ENCODE measurements at regions of chr19 and their contacts with region 1.

Region 1: GRCh38 chr19:15555759-15556633 is 47.7 kb downstream of the CYP4F22 start:
- DNase-seq: peak; percentile 88
- ATAC-seq: peak; percentile 90
- H3K4me3 Mint-ChIP-seq: peak overlapping the region; percentile 83
- H3K27ac Mint-ChIP-seq: peak overlapping the region; percentile 73
- H3K4me1 Mint-ChIP-seq: peaks cover 17% of the 10 kb centered on the region
- H3K27me3 Mint-ChIP-seq: peaks cover 9% of the 10 kb centered on the region
- CTCF ChIP-seq: peak; percentile 33

Region 2: DNA sequence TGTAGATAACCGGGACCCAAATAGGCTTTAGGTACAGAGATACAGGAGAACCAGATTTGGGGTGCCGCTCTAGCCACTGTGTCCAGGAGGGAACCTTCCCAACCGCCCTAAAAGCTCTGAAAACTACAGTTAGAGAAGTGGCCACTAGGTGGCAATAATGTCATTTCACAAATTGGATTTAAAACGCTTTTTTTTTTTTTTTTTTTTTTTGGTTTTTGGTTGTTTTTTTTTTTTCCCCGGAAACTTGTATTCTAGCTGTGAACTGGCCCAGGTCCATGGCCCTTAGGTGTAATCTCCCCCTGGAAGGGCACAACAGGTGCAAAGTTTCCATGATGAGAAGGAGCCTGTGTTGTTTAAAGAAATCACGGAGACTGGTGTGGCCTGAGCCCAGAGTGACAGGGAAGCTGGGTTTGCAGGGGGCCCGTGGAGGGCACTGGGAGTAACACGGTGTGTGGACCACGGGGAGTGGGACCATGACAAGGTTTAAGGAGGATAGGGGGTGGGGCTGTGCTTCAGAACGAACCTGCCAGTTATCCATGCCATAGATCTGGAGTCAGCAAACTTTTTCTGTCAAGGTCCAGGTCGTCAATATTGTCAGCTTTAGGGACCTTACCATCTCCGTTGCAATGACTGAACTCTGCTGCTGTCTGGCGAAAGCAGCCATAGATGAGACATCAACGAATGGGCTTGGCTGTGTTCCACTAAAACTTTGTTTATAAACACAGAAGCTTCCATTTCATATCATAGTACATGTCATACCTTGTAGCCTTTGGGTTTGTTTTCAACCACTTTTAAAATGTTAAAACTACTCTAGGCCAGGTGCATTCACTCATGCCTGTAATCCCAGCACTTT is 463.9 kb before region 1 on chr19:
- CTCF ChIA-PET with region 1: interaction called, 9 read pairs
- POLR2A ChIA-PET with region 1: no interaction called
- intact Hi-C with region 1: loop called (anchors 1 kb)
- DNase-seq: no peak
- ATAC-seq: peak; percentile 47
- H3K4me3 Mint-ChIP-seq: no peak overlapping the region
- H3K27ac Mint-ChIP-seq: no peak overlapping the region
- H3K4me1 Mint-ChIP-seq: peaks cover 3% of the 10 kb centered on the region
- H3K27me3 Mint-ChIP-seq: peaks cover 9% of the 10 kb centered on the region
- CTCF ChIP-seq: peak; percentile 59

Region 3: DNA sequence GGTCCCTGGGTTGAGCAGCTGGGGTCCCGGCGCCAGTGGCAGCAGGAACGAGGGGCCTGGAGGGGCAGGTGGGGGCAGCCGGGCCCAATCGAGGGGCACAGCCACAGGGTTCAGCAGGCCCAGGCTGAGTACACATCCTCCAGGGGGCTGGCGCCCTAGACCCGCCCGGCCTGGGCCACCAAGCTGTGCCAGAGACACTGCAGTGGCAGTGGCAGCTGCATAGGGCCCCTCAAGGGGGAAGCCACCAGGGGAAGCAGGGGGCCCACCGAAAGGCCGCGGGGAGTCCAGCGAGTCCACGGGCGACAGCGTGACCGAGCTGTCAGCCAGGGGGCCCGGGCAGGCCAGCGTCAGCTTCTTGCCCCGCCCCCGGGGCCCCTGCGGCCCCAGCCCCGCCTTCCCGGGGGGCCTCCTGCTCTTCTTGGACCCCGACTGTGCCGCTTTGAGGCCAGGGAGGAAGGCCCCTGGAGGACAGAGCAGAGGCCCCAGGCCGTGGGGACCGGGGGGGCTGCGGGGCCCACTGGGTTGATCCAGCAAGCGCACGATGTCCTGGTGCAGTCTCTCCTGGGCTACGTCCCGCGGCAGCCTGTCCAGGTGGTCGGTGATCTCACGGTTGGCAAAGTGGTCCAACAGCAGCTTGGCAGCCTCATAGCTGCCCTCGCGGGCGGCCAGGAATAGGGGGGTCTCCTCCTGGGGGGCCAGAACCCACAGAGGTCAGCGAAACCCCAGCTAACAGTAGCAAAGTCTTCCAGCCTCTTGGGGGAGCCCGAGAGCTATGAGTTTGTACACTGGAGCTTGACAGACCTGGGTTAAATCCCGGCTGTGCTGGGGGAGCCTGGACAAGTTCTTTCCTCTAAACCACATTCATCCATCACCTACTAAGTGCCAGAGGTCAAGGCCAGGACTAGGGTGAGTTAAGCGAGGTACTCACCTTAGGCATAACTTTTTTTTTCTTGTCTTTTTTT is 394.7 kb before region 1 on chr19:
- CTCF ChIA-PET with region 1: interaction called, 4 read pairs
- POLR2A ChIA-PET with region 1: no interaction called
- intact Hi-C with region 1: loop called (anchors 1 kb)
- DNase-seq: no peak
- ATAC-seq: no peak
- H3K4me3 Mint-ChIP-seq: no peak overlapping the region
- H3K27ac Mint-ChIP-seq: no peak overlapping the region
- H3K4me1 Mint-ChIP-seq: no peaks in the 10 kb centered on the region
- H3K27me3 Mint-ChIP-seq: peaks cover 6% of the 10 kb centered on the region
- CTCF ChIP-seq: no peak

Region 4: GRCh38 chr19:15332311-15332996 is 223.5 kb before region 1 on chr19 and contains the start of gene BRD4:
- CTCF ChIA-PET with region 1: no interaction called
- POLR2A ChIA-PET with region 1: no interaction called
- intact Hi-C with region 1: loop called (anchors 1 kb)
- DNase-seq: peak; percentile 86
- ATAC-seq: peak; percentile 35
- H3K4me3 Mint-ChIP-seq: peak within 1 kb of the TSS; percentile 95
- H3K27ac Mint-ChIP-seq: peak within 1 kb of the TSS; percentile 95
- H3K4me1 Mint-ChIP-seq: peaks cover 60% of the 10 kb centered on the region
- H3K27me3 Mint-ChIP-seq: no peaks in the 10 kb centered on the region
- CTCF ChIP-seq: no peak
- total RNA-seq, gene BRD4: 144 and 164 TPM in 2 replicates

Region 5: DNA sequence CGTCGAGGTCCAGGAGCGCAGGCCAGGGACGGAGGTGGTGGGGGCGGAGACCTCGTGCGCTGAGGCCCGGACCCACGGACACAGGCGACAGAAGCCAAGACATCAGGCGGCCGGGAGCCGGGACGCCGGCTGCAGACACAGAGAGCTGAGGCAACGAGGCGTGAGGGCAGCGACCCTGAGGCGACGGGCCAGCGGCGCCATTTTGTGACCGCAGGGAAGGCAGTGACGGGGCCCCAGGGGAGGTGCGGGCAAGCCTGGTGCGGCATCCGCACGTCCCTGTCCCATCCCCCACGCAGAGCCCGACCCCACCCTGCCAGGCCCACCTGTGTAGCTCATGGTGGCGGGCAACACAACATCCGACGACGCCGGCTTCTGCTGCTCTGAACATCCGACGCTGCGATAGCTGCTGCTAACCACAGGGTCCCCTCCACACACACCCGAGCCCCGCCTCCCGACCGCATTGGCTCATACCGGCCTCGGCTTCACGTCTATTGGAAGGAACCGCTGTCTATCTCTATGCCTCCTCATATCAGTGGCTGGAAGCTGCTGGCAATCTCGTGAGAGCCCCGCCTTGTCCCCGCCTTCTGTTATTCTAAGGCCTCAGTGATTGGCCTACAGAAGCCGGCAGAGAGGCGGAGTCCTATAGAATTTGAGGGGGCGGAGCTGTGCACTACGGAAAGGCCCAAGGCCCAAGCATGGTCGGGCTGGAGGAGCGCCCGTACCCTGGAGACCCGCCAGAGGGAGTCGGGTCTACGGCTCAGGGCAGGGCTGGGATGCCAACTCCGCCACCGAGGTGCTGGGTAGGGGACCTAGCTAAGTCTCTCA is 137.2 kb before region 1 on chr19 and contains the start of gene AKAP8L:
- CTCF ChIA-PET with region 1: interaction called, 87 read pairs
- POLR2A ChIA-PET with region 1: interaction called, 19 read pairs
- intact Hi-C with region 1: loop called (anchors 1 kb)
- DNase-seq: peak; percentile 94
- ATAC-seq: peak; percentile 92
- H3K4me3 Mint-ChIP-seq: peak within 1 kb of the TSS; percentile 99
- H3K27ac Mint-ChIP-seq: peak within 1 kb of the TSS; percentile 99
- H3K4me1 Mint-ChIP-seq: peaks cover 42% of the 10 kb centered on the region
- H3K27me3 Mint-ChIP-seq: no peaks in the 10 kb centered on the region
- CTCF ChIP-seq: no peak
- total RNA-seq, gene AKAP8L: 126 and 163 TPM in 2 replicates

Region 6: GRCh38 chr19:15466851-15467733 is 88.9 kb before region 1 on chr19:
- CTCF ChIA-PET with region 1: interaction called, 4 read pairs
- POLR2A ChIA-PET with region 1: no interaction called
- intact Hi-C with region 1: loop called (anchors 10 kb)
- DNase-seq: no peak
- ATAC-seq: no peak
- H3K4me3 Mint-ChIP-seq: peak overlapping the region; percentile 50
- H3K27ac Mint-ChIP-seq: peak overlapping the region; percentile 12
- H3K4me1 Mint-ChIP-seq: peaks cover 50% of the 10 kb centered on the region
- H3K27me3 Mint-ChIP-seq: peaks cover 15% of the 10 kb centered on the region
- CTCF ChIP-seq: no peak

Region 7: GRCh38 chr19:15488489-15489224 is 67.3 kb before region 1 on chr19:
- CTCF ChIA-PET with region 1: no interaction called
- POLR2A ChIA-PET with region 1: no interaction called
- intact Hi-C with region 1: no loop called
- DNase-seq: no peak
- ATAC-seq: no peak
- H3K4me3 Mint-ChIP-seq: no peak overlapping the region
- H3K27ac Mint-ChIP-seq: no peak overlapping the region
- H3K4me1 Mint-ChIP-seq: no peaks in the 10 kb centered on the region
- H3K27me3 Mint-ChIP-seq: peaks cover 9% of the 10 kb centered on the region
- CTCF ChIP-seq: no peak

Measured in activated B cell treated with CpG ODN at 0.5 μM for 24 hours (primary cell).